ENCODE measurements at regions of chr13 and their contacts with region 1.

Region 1: DNA sequence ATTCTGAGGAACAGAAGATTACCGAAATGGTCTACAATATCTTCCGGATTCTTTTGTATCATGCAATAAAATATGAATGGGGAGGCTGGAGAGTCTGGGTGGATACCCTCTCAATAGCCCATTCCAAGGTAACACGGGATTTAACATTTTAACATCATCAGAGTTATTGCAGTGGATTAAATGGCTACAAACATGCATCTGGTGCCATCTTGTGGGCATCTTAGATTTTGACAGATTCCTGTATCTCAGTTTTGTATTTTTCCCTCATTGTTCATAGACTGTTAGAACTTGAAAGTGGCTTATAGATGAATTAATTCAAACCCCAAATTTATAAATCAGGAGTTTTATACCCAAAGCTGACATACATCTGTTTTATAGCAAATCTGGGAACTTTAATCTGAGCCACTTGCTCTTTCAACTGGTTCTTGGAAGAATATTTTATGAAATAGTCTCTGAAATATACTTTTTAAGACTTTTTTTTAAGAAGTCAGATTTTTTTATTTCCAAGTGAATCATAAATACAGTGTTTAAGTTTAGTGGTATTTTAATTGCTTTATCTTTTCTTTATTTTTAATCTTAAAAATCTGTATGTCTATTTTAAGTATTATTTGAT is 215.2 kb downstream of the NBEA start:
- DNase-seq: peak; percentile 64
- H3K4me3 ChIP-seq: no peak overlapping the region
- H3K27ac ChIP-seq: no peak overlapping the region
- H3K4me1 ChIP-seq: no peaks in the 10 kb centered on the region
- H3K27me3 ChIP-seq: no peaks in the 10 kb centered on the region

Region 2: GRCh38 chr13:33577007-33577406 is 1580.2 kb before region 1 on chr13:
- in situ Hi-C with region 1: loop called (anchors 25 kb)
- DNase-seq: peak; percentile 10
- H3K4me3 ChIP-seq: no peak overlapping the region
- H3K27ac ChIP-seq: no peak overlapping the region
- H3K4me1 ChIP-seq: no peaks in the 10 kb centered on the region
- H3K27me3 ChIP-seq: no peaks in the 10 kb centered on the region

Region 3: DNA sequence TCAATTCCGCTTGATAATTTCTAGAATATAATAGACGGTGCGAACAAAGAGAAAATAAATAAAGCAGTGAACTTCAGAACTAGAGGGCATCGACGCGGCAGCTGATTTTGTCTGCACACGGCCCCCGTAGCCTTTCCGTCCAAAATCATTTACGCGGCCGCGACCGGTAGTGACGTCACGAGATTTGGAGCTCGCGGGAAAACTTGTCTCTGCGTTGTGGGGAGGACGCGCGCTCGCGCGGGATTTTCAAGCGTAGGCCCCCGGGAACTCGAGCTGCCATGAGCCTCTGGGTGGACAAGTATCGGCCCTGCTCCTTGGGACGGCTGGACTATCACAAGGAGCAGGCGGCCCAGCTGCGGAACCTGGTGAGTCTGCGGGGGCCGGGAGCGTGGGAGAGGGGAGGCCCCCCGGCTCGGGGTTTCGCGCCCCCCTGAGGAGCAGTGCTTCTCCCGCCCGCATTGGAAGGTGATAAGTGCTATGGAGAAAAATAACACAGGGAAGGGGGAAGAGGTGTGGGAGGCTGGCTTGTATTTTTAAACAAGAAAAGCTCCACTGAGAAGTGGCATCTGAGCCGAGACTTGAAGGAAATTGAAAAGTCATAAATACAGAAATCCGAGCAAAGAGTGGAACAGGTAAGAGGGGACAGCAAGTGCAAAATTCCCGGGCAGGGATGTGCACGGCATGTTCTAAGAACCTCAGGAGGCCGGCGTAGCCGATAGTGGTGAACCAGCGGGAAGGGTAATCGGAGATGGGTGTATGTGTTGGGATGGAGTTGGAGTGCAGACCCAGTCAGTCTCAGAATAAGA is 1339.1 kb before region 1 on chr13 and contains the start of gene RFC3:
- in situ Hi-C with region 1: loop called (anchors 25 kb)
- DNase-seq: peak; percentile 98
- H3K4me3 ChIP-seq: peak within 1 kb of the TSS; percentile 90
- H3K27ac ChIP-seq: peak within 1 kb of the TSS; percentile 76
- H3K4me1 ChIP-seq: 0 out of 2 replicates have a peak, but pooled peaks cover 3% of the 10 kb centered on the region
- H3K27me3 ChIP-seq: no peaks in the 10 kb centered on the region
- total RNA-seq, gene RFC3: 12.6 and 17.7 TPM in 2 replicates

Region 4: DNA sequence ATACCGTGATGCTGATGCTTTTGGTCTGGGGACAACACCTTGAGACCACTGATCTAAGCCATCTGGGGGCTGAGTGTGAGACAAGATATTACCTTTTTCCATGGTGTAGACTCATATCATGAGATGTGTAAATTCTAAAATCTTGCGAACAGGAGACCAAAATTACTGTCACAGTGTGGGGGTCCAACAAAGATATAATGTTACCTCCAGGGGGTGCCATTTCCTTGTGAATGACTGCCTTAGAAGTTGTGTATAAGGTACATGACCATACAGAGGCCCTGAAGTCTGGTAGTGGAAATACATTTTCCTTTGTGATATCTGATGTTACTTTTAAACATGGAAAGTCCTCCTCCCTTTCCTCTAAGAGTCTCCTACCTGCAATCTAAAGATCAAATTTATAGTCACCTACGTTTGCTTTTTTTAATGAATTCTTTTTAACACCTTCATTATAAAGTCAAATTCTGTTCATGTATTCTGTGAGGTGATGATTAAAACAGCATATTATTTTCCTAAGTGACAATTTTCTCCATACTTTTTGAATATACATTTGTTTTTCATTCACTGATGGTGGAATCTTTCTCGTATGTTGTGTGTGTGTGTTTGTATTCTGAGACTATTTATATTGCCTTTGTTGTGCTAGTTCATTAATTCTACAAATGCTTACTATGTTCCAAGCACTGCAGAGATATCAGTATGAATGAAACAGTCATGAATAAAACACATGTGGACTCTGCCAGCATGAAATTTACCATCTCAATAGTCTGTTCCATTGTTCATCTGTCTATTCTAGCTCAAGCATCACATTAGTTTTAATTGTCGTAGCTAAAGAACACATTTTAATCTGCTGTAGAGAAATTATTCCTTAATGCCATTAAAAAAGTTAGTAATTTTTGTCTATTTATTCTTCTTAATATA is 1225.6 kb before region 1 on chr13:
- in situ Hi-C with region 1: loop called (anchors 10 kb)
- DNase-seq: peak; percentile 74
- H3K4me3 ChIP-seq: no peak overlapping the region
- H3K27ac ChIP-seq: no peak overlapping the region
- H3K4me1 ChIP-seq: no peaks in the 10 kb centered on the region
- H3K27me3 ChIP-seq: no peaks in the 10 kb centered on the region

Region 5: DNA sequence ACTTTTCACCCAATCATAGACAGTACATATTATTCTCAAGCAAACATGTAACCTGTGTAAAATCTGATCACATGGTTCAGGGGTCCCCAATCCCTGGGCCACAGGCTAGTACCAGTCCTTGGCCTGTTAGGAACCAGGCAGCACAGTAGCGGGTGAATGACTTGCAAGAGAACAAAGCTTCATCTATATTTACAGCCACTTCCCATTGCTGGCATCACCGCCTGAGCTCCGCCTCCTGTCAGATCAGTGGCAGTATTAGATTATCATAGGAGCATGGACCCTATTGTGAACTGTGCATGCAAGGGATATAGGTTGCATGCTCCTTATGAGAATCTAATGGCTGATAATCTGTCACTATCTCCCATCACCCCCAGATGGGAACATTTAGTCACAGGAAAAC is 186.2 kb after region 1 on chr13:
- in situ Hi-C with region 1: no loop called
- DNase-seq: no peak
- H3K4me3 ChIP-seq: no peak overlapping the region
- H3K27ac ChIP-seq: no peak overlapping the region
- H3K4me1 ChIP-seq: no peaks in the 10 kb centered on the region
- H3K27me3 ChIP-seq: no peaks in the 10 kb centered on the region

Region 6: GRCh38 chr13:35367586-35367985 is 210.3 kb after region 1 on chr13:
- in situ Hi-C with region 1: no loop called
- DNase-seq: no peak
- H3K4me3 ChIP-seq: no peak overlapping the region
- H3K27ac ChIP-seq: no peak overlapping the region
- H3K4me1 ChIP-seq: no peaks in the 10 kb centered on the region
- H3K27me3 ChIP-seq: no peaks in the 10 kb centered on the region

Measured in GM23248 (cell line).